ENCODE measurements at regions of chr1 and their contacts with region 1.

Region 1: DNA sequence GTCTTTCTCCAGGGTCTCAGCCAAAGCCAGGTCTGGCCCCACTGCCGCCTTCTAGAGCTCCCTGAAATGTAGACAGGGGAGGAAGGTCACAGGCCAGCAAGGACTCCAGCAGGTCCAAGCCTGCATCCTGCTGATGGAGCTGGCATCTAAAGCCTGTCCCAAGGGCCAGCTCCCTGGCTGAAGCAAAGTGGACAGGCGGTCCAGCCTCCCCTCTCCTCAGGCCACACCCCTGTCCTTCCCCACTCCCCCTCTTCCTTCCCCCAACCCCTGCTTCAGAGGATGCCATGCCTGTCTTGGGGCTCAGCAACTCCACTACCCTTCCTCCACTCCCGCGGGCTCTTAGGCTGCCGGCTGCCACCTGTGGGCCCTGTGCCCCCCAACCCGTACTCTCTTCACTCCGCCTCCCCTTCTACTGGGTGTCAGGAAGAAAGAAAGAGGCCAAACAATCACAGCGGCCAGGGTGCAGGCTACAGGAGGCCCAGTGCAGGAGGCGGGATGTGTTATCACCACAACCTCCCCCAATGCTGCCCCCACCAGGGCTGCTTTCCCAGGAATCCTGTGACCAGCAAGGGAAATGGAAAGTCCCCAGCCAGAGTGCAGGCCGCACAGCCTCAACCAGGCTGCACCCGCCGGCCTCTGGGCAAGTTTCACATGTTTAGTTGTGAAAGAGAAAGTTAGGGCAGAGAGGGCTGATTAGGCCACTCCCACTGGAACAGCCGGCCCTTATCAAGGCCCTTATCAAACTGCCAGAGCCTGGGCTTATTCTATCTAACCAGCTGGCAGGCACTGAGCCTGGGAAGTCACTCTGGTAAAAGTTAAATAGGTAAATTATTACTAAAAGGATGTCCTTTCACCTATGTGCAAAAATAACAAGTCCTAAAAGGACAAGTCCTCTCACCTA is 34.1 kb downstream of the ACOT7 start:
- DNase-seq: no peak
- ATAC-seq: no peak
- H3K4me3 ChIP-seq: no peak overlapping the region
- H3K27ac ChIP-seq: no peak overlapping the region
- H3K4me1 ChIP-seq: peaks cover under 1% of the 10 kb centered on the region; the same call in 1 of the 2 replicates
- H3K27me3 ChIP-seq: no peaks in the 10 kb centered on the region
- CTCF ChIP-seq: no peak

Region 2: GRCh38 chr1:6393400-6394187 is 34.1 kb after region 1 on chr1 and contains the start of gene ACOT7:
- CTCF ChIA-PET with region 1: interaction called, 3 read pairs
- POLR2A ChIA-PET with region 1: no interaction called
- intact Hi-C with region 1: loop called (anchors 1 kb)
- DNase-seq: peak; percentile 97
- ATAC-seq: peak; percentile 87
- H3K4me3 ChIP-seq: peak within 1 kb of the TSS; percentile 78
- H3K27ac ChIP-seq: peak within 1 kb of the TSS; percentile 90
- H3K4me1 ChIP-seq: peaks cover 17% of the 10 kb centered on the region
- H3K27me3 ChIP-seq: no peaks in the 10 kb centered on the region
- CTCF ChIP-seq: peak; percentile 22; the same call in 1 of the 2 replicates
- total RNA-seq, gene ACOT7: 164 and 165 TPM in 2 replicates

Region 3: DNA sequence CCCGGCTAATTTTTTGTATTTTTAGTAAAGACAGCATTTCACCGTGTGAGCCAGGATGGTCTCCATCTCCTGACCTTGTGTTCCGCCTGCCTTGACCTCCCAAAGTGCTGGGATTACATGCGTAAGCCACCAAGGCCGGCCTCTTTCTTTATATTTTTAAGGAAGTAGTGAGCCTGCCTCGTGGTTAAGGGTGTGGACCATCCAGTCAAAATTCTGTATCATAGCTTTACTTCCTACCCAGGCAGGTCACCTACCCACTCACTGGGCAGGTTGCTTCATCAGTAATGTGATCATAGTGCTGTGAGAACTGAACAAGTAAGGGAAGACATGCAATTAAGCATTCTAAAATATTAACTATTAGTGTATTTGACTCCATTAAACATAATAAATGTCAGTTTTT is 42.2 kb after region 1 on chr1:
- CTCF ChIA-PET with region 1: interaction called, 3 read pairs
- POLR2A ChIA-PET with region 1: no interaction called
- intact Hi-C with region 1: loop called (anchors 1 kb)
- DNase-seq: peak; percentile 45
- ATAC-seq: peak; percentile 25; the same call in 1 of the 2 replicates
- H3K4me3 ChIP-seq: no peak overlapping the region
- H3K27ac ChIP-seq: no peak overlapping the region
- H3K4me1 ChIP-seq: peaks cover 7% of the 10 kb centered on the region; the same call in 1 of the 2 replicates
- H3K27me3 ChIP-seq: no peaks in the 10 kb centered on the region
- CTCF ChIP-seq: no peak

Region 4: GRCh38 chr1:6438047-6438525 is 78.6 kb after region 1 on chr1:
- CTCF ChIA-PET with region 1: interaction called, 6 read pairs
- POLR2A ChIA-PET with region 1: no interaction called
- intact Hi-C with region 1: loop called (anchors 2 kb)
- DNase-seq: peak; percentile 92
- ATAC-seq: peak; percentile 65
- H3K4me3 ChIP-seq: no peak overlapping the region
- H3K27ac ChIP-seq: no peak overlapping the region
- H3K4me1 ChIP-seq: no peaks in the 10 kb centered on the region; the same call in 1 of the 2 replicates
- H3K27me3 ChIP-seq: no peaks in the 10 kb centered on the region
- CTCF ChIP-seq: peak; percentile 94

Measured in PC-3 (cell line).